AG04449 (cell line): ENCODE measurements at regions of chr14 and their contacts with region 1.

Region 1: DNA sequence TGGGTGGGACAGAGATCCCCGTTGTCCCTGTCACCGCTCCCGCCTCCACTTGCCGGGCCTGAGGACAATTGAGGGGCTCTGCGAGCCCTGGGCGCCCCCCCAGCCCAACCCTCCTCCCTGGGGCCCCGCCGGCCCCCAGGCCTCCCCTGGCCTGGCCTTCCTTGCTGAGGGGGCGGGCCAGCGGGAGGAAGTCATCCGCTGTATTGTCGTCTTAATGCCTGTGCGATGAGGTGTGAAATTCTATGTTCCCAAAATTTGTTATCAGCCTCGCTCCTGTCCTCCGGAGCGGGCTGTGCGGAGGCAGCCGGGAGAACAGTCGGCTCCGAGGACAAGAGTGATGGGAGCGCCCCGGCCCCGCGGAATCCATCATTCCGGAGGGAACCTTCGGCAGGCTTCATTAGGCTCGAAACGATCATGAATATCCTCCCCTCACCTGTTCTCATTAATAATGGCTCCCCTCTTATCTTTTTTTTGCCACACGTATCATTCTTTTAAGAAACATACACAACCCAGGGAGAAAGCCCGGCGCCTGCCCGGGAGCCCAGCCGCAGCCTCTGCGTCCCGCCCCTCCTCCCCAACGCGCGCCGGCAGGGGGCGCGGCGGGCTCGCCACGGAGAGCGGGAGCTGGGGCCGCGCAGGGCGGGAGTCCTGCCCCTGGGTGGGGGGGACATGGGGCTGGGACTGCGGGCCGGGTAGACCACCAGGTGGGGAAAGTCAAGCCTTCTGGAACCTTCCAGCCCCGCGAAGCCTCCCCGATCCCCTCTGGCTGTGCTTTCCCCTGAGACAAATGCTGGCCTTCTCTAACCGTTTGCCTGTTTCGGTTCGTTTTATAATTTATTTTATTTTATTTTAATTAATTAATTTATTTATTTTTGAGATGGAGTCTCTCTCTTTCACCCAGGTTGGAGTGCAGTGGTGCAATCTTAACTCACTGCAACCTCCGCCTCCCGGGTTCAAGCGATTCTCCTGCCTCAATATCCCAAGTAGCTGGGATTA is 17.1 kb upstream of the DLK1 start:
- DNase-seq: no peak
- H3K4me3 ChIP-seq: peak overlapping the region; percentile 44
- CTCF ChIP-seq: peak; percentile 77

Region 2: GRCh38 chr14:100696590-100696989 is 13.0 kb before region 1 on chr14:
- CTCF ChIA-PET with region 1: interaction called, 20 read pairs
- POLR2A ChIA-PET with region 1: no interaction called
- DNase-seq: no peak
- H3K4me3 ChIP-seq: no peak overlapping the region
- CTCF ChIP-seq: no peak

Region 3: GRCh38 chr14:100723135-100723829 is 13.7 kb after region 1 on chr14:
- CTCF ChIA-PET with region 1: interaction called, 16 read pairs
- POLR2A ChIA-PET with region 1: no interaction called
- DNase-seq: no peak
- H3K4me3 ChIP-seq: no peak overlapping the region
- CTCF ChIP-seq: no peak

Region 4: DNA sequence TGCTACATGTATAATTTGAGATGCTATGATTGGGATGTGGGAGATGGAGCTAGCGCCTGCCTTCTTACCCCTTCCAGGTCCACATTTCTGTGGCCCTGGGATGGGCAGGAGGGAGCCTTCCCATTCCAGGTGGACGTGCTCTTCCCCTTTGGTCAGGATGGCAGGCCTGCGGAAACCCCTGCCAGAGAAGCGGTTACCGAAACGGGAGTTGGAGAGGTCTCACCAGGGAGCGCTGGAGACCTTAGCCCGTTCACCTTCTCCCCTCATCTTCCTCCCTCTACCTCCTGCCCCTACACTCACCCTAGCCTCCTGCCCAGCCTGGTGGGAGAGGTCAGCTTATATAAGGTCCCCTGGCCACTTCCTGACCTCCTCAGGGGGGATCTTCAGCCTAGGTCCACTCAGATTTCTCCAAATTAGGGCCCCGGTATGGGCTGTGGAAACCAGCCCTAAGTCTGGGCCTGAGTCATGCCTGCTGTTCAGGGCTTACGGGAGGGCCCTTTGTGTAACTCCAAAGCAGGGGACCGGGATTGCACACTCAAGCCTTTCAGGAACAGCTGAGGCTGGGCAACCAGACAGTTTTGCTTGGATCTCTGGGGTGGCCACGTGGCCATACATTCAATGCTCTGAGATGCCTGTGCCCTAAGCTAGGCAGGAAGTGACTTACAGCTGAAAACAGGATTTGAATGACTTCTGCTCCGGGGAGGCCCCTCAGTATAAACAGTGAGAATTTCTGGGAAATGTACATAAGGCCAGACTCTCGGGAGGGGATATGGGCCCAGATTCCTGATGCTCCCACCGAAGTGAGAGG is 106.1 kb after region 1 on chr14:
- CTCF ChIA-PET with region 1: interaction called, 12 read pairs
- POLR2A ChIA-PET with region 1: no interaction called
- DNase-seq: peak; percentile 58
- H3K4me3 ChIP-seq: no peak overlapping the region
- CTCF ChIP-seq: no peak

Region 5: GRCh38 chr14:101235335-101236103 is 525.9 kb after region 1 on chr14:
- CTCF ChIA-PET with region 1: interaction called, 11 read pairs
- POLR2A ChIA-PET with region 1: no interaction called
- DNase-seq: no peak
- H3K4me3 ChIP-seq: no peak overlapping the region
- CTCF ChIP-seq: peak; percentile 92